Heart left ventricle (tissue), 16 donors: ENCODE measurements at regions of chr15 and their contacts with region 1.

Region 1: DNA sequence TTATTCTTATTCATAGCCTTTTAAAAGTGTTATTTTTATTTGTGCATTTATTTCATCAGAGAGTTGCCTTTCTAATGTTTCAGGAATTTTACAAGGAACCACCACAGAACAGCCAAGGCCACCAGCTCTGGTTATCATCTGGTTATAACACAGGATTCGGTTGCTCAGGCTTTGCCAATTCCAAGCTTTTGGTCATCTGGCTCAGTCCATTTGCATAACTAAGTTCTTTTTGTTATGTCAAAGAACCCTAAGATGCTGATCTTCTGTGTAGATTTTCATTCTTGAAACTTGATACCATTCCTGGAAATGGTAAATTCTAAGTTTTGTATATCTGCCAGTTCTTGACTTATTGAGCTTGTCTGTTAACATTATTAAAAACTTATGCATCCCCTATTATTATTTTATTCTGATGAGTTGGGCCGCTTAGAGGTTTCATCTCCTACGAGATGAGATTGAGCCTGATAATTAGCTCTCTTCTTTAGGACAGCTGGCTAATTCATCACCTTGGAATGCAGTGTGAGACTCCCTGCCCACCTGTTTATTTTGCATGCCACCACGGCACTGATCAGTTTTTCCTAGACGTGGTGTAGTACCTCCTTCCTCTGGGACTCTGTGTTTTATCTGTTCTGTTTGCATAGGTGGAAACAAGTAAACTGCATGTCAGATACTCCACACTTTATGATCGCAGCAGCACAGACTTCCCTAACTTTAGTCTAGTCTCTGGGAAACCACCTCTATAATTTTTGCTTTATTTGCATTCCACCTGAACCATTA is 264.8 kb downstream of the SLCO3A1 start:
- DNase-seq: no peak
- ATAC-seq: no peak
- H3K4me3 ChIP-seq: no peak overlapping the region
- H3K27ac ChIP-seq: peak overlapping the region in 6 of 12 donors; percentile 0 to 60 (median 46)
- H3K4me1 ChIP-seq: peaks cover 0 to 53% (median 24%) of the 10 kb centered on the region in 12 donors
- H3K27me3 ChIP-seq: no peaks in the 10 kb centered on the region
- CTCF ChIP-seq: no peak
- POLR2A ChIP-seq: no peak

Region 2: DNA sequence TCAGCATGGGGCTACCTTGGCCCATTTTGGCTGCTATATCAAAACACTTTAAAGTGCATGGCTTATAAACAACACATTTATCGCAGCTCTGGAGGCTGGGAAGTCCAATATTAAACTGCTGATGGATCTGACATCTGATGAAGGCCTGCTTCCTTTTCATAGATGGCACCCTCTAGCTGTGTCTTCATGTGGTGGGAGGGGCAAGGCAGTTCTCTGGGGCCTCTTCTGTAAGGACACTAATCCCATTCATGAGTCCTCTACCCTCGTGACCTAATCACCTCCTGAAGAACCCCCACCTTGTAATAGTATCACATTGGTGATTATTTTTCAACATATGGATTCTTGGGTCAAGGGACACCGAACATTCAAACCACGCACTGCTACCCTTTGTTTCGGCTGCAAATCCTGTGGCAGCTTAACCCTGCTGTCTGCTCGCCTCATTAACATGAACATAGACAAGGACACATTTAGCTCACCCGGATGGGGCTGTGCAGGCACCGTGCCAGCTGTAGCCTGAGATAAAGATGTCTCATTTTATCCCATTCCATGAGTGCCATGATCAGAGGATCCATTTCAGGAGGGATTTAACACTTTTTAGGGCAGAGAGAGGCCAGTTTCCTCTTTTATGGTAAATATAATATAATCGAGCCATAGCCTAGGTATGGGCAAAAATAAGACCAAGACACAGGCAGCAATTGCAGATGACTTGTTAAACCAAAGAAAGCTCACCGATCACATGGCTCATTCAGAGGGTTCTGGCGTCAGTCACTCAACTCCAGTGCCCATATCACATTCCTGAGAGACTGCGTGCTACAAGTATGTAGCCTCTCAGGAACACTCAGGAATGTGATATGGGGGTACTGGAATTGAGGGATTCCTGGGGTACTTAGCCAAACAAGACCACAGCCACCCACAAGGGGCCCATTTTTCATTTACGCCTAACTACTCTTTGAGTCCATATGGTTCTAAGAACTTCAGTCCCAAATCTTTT is 24.2 kb after region 1 on chr15:
- intact Hi-C with region 1: loop called in 1 of 10 experiments (anchors 2 kb)
- DNase-seq: peak; percentile 39 to 71 (median 63)
- ATAC-seq: peak; percentile 85 to 90 (median 87)
- H3K4me3 ChIP-seq: no peak overlapping the region
- H3K27ac ChIP-seq: peak overlapping the region; percentile 8 to 92 (median 66)
- H3K4me1 ChIP-seq: peaks cover 0 to 26% (median 6%) of the 10 kb centered on the region in 12 donors
- H3K27me3 ChIP-seq: no peaks in the 10 kb centered on the region
- CTCF ChIP-seq: no peak
- POLR2A ChIP-seq: no peak

Region 3: DNA sequence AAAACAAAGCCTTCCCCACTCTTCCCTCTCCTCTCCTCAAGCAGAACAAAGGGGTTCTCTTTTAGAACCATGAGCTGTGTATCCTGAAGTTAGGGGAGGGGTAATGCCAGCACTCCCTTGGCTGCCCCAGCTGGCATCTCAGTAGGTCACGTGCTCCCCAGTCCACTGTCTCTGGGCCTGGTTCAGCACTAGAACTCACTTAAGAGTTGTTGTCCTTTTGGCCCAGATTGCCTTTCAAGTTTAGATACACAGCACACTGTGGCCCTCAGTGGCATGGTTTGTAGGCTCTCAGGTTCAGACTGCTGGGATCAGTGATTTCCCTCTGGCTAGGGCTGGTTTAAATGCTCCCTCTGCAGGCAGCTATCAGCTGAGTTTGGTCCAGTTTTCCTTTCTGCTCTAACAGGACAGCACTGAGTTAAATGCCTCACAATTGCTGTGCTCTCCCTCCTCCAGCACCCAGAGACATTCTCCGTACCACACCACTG is 86.9 kb after region 1 on chr15:
- intact Hi-C with region 1: loop called in 2 of 10 experiments (anchors 5 kb)
- DNase-seq: peak in 3 of 5 donors; percentile 25 to 34 (median 28)
- ATAC-seq: peak; percentile 49 to 83 (median 71)
- H3K4me3 ChIP-seq: no peak overlapping the region
- H3K27ac ChIP-seq: peak overlapping the region in 4 of 12 donors; percentile 8 to 46 (median 18)
- H3K4me1 ChIP-seq: peaks cover 0 to 9% (median 0%) of the 10 kb centered on the region in 12 donors
- H3K27me3 ChIP-seq: no peaks in the 10 kb centered on the region
- CTCF ChIP-seq: peak in 11 of 12 donors; percentile 9 to 51 (median 34)
- POLR2A ChIP-seq: no peak

Region 4: GRCh38 chr15:92217896-92218295 is 99.5 kb after region 1 on chr15:
- intact Hi-C with region 1: no loop called
- DNase-seq: no peak
- ATAC-seq: no peak
- H3K4me3 ChIP-seq: no peak overlapping the region
- H3K27ac ChIP-seq: no peak overlapping the region
- H3K4me1 ChIP-seq: no peaks in the 10 kb centered on the region
- H3K27me3 ChIP-seq: no peaks in the 10 kb centered on the region
- CTCF ChIP-seq: no peak
- POLR2A ChIP-seq: no peak